Gastrocnemius medialis (tissue), 4 donors: ENCODE measurements at regions of chr12 and their contacts with region 1.

Region 1: DNA sequence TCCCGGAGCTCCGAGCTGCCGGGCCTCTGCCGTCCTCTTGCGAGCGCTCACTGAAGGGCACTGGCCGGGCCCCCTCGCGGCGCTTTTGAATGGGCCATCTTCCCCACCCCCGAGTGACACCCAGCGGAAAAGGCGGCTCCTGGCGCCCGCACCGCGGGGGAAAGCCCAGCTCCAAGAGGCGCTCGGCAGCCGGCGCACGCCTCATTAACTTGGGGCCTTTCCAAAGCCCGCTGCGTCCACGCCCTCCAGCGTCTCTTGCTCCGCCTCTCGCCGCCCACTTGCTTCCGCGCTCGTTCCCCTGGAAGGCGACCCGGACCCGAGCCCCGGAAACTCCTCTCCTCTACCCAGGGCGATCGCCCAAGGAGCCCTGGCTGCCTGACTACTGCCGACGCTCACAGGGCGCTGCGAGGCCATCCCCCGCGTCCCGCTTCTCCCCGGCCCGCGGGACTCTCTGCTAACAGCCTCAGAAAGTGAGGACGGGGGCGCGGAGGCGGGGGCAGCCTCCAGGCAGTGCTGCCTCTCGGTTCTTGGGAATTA is at the start of gene PHLDA1:
- DNase-seq: peak; percentile 84 to 86
- ATAC-seq: peak; percentile 73 to 80
- H3K4me3 ChIP-seq: peak within 1 kb of the TSS; percentile 77 to 88 (median 85)
- H3K27ac ChIP-seq: peak within 1 kb of the TSS; percentile 86 to 95 (median 92)
- H3K4me1 ChIP-seq: peaks cover 8 to 20% of the 10 kb centered on the region in 2 donors
- H3K27me3 ChIP-seq: peaks cover 0 to 40% (median 22%) of the 10 kb centered on the region in 3 donors
- CTCF ChIP-seq: peak; percentile 29 to 63 (median 55)
- POLR2A ChIP-seq: peak; percentile 64 to 91
- total RNA-seq, gene PHLDA1: 2.4 to 32.7 (median 7.9) TPM

Region 2: DNA sequence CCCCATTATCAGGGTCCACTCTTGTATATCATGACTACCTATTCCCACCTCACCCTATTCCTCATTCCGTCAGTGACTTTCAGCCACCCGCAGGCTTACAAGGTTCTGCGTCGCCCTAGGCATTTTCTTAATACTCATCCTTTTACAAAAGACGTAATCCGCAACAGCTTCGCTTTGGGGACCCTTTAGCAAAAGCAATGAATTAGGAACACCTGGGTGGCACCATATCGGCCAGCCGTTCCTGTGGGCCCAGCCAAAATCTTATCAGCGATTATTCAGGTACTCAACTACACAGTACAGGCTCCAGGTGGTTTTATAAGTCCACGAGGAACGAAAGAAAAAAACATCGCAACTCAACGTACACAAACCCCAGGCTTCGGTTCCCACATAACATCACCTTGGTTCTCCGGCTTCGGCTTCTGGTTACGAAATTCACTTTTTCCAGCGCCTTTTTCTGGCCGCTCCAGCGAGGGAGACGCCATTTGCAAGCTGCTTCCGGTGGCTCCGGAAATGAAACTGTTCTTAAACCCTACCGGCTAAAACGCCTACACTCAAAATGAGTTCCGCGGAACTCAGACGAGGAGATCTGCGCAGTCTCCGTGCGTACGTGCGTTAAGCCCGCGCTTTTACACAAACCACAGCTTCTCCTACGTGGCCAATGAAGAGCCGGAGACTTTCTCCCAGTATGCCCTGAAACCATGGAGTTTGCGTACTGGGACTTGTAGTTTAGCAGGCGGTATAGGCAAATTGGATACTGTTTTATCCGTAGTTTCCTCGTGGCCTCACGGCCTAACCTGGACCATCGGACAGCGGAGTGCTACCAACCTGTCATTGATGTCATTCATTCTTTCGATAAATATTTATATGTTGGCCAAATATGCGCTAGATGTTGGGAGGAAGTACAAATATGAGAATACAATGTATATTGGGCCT is 520.2 kb before region 1 on chr12 and contains the start of gene KRR1:
- in situ Hi-C with region 1: no loop called
- intact Hi-C with region 1: loop called (anchors 5 kb)
- DNase-seq: peak; percentile 87 to 93
- ATAC-seq: peak; percentile 100
- H3K4me3 ChIP-seq: peak within 1 kb of the TSS; percentile 57 to 99 (median 82)
- H3K27ac ChIP-seq: peak within 1 kb of the TSS; percentile 69 to 83 (median 77)
- H3K4me1 ChIP-seq: peaks cover 26 to 35% of the 10 kb centered on the region in 2 donors
- H3K27me3 ChIP-seq: no peaks in the 10 kb centered on the region
- CTCF ChIP-seq: peak in 2 of 5 experiments; percentile 4 to 36
- POLR2A ChIP-seq: peak; percentile 34 to 52
- total RNA-seq, gene KRR1: 26.8 to 43.1 (median 34.8) TPM

Region 3: GRCh38 chr12:75722714-75723200 is 308.8 kb before region 1 on chr12:
- in situ Hi-C with region 1: no loop called
- intact Hi-C with region 1: loop called (anchors 5 kb)
- DNase-seq: peak; percentile 51 to 53
- ATAC-seq: peak; percentile 89 to 95
- H3K4me3 ChIP-seq: no peak overlapping the region
- H3K27ac ChIP-seq: peak overlapping the region; percentile 56 to 79 (median 60)
- H3K4me1 ChIP-seq: peaks cover 10 to 44% of the 10 kb centered on the region in 2 donors
- H3K27me3 ChIP-seq: no peaks in the 10 kb centered on the region
- CTCF ChIP-seq: no peak
- POLR2A ChIP-seq: no peak

Region 4: GRCh38 chr12:75944097-75944904 is 87.3 kb before region 1 on chr12:
- in situ Hi-C with region 1: no loop called
- intact Hi-C with region 1: no loop called
- DNase-seq: no peak
- ATAC-seq: peak; percentile 41 to 45
- H3K4me3 ChIP-seq: no peak overlapping the region
- H3K27ac ChIP-seq: no peak overlapping the region
- H3K4me1 ChIP-seq: no peaks in the 10 kb centered on the region
- H3K27me3 ChIP-seq: no peaks in the 10 kb centered on the region
- CTCF ChIP-seq: no peak
- POLR2A ChIP-seq: no peak

Region 5: DNA sequence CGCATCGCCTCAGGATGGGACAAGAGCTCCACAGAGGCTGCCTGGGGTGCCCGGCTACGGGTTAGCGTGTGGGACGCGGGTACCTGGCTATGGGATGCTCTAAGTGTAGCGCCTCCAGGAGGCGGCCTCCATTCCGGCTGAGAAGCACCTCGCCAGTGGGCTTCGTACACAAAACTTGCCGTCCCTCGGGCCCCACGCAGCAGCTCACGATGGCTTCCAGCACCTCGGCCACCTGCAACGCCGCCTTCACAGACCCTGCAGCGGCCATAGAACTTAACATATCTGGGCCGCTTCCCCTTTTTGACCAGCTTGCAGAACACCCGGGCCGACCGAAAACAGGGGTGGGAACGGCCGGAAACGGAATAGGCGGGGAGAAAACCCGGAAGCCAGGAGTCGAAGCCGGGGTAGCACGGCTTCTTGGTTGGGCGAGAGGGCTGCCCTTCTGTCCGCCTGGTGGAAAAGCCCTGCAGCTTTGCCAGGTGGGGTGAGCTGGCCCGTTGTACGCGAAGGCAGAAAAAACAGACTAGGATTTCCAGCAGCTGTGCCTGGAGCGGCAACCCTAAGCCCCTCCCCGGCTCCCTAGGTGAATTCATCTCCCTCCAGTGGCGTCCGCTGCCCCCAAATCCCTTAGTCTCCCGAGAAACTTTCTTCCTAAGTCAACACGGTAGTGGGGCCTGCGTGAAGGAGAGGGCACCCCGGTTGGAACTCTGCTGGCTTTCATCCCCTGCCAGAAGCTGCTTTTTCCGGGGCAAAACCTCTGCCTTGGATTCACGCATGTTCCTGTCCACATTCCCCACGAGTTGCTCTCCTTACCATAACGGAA is 316.7 kb after region 1 on chr12 and contains the start of gene BBS10:
- in situ Hi-C with region 1: no loop called
- intact Hi-C with region 1: loop called (anchors 1 kb)
- DNase-seq: peak; percentile 83 to 91
- ATAC-seq: peak; percentile 91 to 96
- H3K4me3 ChIP-seq: peak within 1 kb of the TSS; percentile 68 to 91 (median 82)
- H3K27ac ChIP-seq: peak within 1 kb of the TSS; percentile 83 to 92 (median 88)
- H3K4me1 ChIP-seq: peaks cover 30 to 39% of the 10 kb centered on the region in 2 donors
- H3K27me3 ChIP-seq: no peaks in the 10 kb centered on the region
- CTCF ChIP-seq: peak in 4 of 5 experiments; percentile 34 to 56 (median 46)
- POLR2A ChIP-seq: peak; percentile 43 to 60
- total RNA-seq, gene BBS10: 9.0 to 17.5 (median 11.5) TPM

Region 6: GRCh38 chr12:76559400-76560085 is 527.9 kb after region 1 on chr12 and contains the start of gene OSBPL8:
- in situ Hi-C with region 1: no loop called
- intact Hi-C with region 1: loop called (anchors 10 kb)
- DNase-seq: peak; percentile 90 to 95
- ATAC-seq: peak; percentile 90 to 94
- H3K4me3 ChIP-seq: peak within 1 kb of the TSS; percentile 90 to 100 (median 98)
- H3K27ac ChIP-seq: peak within 1 kb of the TSS; percentile 93 to 99 (median 95)
- H3K4me1 ChIP-seq: peaks cover 12 to 35% of the 10 kb centered on the region in 2 donors
- H3K27me3 ChIP-seq: no peaks in the 10 kb centered on the region
- CTCF ChIP-seq: peak; percentile 23 to 48 (median 37)
- POLR2A ChIP-seq: peak; percentile 85 to 94
- total RNA-seq, gene OSBPL8: 25.6 to 46.0 (median 43.4) TPM